Heart right ventricle (tissue), 16 donors: ENCODE measurements at regions of chr5 and their contacts with region 1.

Region 1: DNA sequence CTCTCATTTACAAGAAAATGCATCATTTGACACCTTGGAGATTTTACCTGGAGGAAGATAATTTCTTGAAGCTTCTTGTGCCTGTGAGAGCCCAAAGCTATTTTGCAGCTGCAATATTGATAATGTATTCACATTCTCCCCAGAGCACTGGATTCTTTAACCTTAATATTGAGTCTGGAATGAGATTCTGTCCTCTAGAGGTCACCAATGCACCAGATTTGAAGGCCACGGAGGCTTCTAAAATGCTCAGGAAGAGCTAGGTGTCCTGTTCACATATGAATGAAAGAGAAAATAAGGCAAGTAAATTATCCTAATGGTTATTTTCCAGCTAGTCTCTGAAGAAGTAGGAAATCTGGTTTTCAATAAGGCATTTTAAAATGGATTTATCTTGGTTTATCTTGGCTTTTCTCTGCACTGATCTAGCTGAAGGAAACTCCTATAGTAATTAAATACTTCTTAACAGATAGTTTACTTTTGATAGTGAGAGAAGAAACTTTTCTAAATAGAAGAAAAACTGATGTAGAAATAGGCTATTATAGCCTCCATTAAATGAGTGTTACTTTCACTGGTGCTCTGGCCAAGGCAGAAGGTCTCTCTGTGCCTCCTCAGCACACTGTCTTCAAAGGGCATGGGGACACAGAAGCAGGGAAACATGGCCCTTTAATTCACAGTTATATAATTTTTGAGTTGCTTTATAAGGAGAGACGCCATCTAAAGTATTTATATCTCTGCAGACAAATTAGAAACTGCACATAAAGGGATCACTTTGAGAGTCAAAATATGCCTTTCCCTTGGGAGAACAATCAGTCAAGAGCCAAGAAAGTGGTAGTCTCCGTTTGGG is 297.0 kb upstream of the ACTBL2 start:
- DNase-seq: peak in 1 of 2 donors; percentile 56
- ATAC-seq: peak; percentile 71 to 89 (median 83)
- H3K4me3 ChIP-seq: peak overlapping the region in 3 of 10 donors; percentile 2 to 11 (median 8)
- H3K27ac ChIP-seq: peak overlapping the region in 7 of 10 donors; percentile 35 to 73 (median 64)
- H3K4me1 ChIP-seq: peaks cover 0 to 50% (median 13%) of the 10 kb centered on the region in 9 donors
- H3K27me3 ChIP-seq: no peaks in the 10 kb centered on the region
- CTCF ChIP-seq: peak; percentile 23 to 86 (median 69)

Region 2: DNA sequence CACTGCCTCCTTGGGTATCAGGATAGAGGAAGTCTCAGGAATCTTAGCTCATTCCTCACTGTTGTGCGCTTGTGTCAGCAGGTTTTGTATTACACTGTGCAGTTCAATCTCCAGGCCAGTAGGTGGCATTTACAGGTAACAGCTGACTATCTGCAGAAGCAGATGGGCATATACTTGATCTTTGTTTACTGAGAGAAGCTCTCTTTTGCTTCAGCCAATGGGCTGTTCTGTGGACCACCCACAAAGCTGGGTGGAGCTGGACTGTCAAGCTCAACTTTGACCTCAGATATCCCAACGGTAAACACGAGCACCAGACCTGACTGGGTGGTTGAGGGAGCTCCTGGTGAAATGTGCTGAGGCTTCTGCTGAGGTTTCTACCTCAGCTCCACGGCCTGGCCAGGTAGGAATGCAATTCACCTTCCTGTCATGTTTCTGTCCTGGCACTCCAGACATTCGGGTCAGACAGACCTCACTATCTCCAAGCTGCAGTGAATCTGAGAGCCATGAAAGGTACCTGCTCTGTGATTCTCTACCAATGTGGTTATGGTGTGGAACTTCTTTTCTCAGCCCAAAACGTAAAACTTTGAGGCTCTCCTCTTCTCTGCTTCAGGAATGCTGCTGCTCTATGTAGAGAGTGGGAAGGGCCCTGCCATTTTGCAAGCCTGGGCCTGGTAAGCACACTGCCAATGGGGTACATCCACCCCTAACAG is 129.1 kb before region 1 on chr5:
- intact Hi-C with region 1: loop called in 2 of 10 experiments (anchors 10 kb)
- DNase-seq: no peak
- ATAC-seq: peak in 4 of 8 donors; percentile 37 to 58 (median 52)
- H3K4me3 ChIP-seq: no peak overlapping the region
- H3K27ac ChIP-seq: no peak overlapping the region
- H3K4me1 ChIP-seq: peaks cover 0 to 13% (median 0%) of the 10 kb centered on the region in 9 donors
- H3K27me3 ChIP-seq: no peaks in the 10 kb centered on the region
- CTCF ChIP-seq: peak; percentile 30 to 66 (median 57)

Region 3: GRCh38 chr5:57841676-57842363 is 62.2 kb after region 1 on chr5:
- intact Hi-C with region 1: loop called in 1 of 10 experiments (anchors 5 kb)
- DNase-seq: no peak
- ATAC-seq: peak in 7 of 8 donors; percentile 66 to 87 (median 73)
- H3K4me3 ChIP-seq: no peak overlapping the region
- H3K27ac ChIP-seq: peak overlapping the region in 4 of 10 donors; percentile 29 to 67 (median 42)
- H3K4me1 ChIP-seq: peaks cover 0 to 47% (median 20%) of the 10 kb centered on the region in 9 donors
- H3K27me3 ChIP-seq: no peaks in the 10 kb centered on the region
- CTCF ChIP-seq: no peak

Region 4: DNA sequence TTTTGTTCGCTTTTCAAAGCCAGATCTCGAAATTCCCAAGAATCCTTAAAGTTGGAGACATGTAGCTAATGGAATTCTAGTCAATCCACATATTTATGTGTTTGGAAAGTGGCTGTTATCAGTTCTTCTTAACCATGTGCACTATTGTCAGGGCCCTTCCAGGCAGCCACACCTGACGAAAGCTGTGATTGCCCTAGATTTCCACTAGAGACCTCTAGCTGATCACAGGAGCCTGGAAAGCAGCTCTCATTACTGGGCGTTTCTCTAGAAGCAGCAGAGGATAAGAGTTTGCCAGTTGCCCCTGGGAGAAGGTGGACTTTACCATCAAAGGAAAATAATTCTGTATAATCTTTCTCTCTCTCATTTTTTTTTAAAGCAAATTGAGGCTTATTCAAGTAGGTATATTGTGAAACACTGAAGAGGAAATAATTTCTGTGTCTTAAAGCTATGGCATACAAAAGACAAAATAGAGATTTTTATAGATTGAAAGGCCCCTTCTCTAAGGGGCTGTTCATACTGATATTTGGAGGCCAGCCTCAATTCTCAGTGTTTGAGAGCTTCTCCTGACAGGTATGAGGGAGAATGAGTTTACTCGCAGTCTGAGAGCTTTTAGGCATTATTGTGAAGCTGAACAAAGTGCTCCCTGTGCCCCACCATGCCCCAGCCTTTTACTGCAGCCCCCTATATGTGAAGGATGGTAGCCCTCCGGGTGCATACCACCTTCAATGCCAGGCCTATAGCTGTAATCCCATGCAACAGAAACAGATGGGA is 108.4 kb after region 1 on chr5:
- intact Hi-C with region 1: loop called (anchors 2 to 10 kb)
- DNase-seq: peak in 1 of 2 donors; percentile 69
- ATAC-seq: peak; percentile 89 to 93 (median 90)
- H3K4me3 ChIP-seq: no peak overlapping the region
- H3K27ac ChIP-seq: peak overlapping the region in 1 of 10 donors; percentile 8
- H3K4me1 ChIP-seq: peaks cover 0 to 32% (median 11%) of the 10 kb centered on the region in 9 donors
- H3K27me3 ChIP-seq: no peaks in the 10 kb centered on the region
- CTCF ChIP-seq: peak; percentile 42 to 82 (median 66)